Activated CD4-positive, alpha-beta memory T cell treated with anti-CD3 and anti-CD28 coated beads for 36 hours (primary cell): ENCODE measurements at regions of chr2 and their contacts with region 1.

Region 1: DNA sequence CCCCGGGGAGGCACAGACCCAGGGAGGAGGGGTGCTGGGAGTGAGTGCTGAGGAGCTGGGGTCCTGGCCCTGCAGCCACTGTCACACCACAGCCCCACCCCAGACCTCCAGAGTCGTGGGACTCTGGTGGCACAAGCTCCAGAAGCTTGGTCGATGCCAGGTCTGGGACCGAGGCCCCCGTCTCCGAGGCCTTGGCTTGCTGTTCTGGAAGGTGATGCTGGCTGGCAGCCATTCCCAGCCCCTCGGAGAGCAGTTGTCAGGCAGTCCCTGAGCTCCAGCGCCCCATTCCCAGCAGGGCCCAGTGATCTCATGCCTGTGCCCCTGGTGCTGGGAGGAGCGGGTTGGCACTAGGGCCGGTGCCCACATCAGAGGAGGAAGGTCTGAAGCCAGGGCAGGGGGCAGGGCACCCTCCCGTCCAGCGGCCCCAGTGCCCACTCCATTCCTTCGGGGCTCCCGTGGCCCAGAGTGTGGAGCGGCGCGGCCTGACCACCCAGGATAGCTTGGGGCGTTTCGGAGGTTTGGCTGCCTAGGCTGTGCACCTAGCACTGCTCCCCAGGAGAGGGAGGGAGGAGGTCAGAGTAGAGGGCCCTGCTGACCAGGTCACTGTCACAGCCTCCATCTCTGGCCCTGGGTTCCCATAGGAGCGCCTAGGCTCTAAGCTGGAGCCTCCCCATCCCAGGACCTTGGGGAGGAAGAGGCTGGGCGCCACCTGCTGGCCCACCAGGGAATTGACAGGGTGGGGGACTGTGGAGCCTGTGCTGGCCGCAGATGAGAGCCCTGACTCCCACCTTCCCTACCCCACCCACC is 16.8 kb upstream of the ALPI start:
- DNase-seq: peak; percentile 55
- H3K4me3 Mint-ChIP-seq: no peak overlapping the region
- H3K27ac Mint-ChIP-seq: no peak overlapping the region
- H3K4me1 Mint-ChIP-seq: no peaks in the 10 kb centered on the region
- H3K27me3 Mint-ChIP-seq: no peaks in the 10 kb centered on the region

Region 2: DNA sequence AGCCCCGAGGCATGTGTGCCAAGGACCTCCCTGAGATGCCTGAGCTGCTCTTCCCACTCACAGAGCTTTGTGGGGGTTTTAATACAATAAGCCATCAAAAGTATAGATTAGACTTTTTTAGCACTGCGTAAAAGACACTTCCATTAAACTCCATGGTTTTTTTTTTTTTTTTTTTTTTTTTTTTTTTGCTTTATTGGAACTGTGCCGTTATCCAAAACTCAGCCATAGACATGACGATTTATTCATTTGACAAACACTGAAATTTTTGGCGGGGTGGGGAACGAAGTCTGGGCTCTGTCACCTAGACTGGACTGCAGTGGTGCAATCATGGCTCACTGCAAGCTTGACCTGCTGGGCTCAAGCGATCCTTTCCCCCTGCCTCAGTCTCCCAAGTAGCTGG is 531.4 kb before region 1 on chr2:
- CTCF ChIA-PET with region 1: interaction called, 5 read pairs
- POLR2A ChIA-PET with region 1: no interaction called
- intact Hi-C with region 1: loop called (anchors 2 kb)
- DNase-seq: no peak
- H3K4me3 Mint-ChIP-seq: no peak overlapping the region
- H3K27ac Mint-ChIP-seq: no peak overlapping the region
- H3K4me1 Mint-ChIP-seq: peaks cover 7% of the 10 kb centered on the region
- H3K27me3 Mint-ChIP-seq: no peaks in the 10 kb centered on the region

Region 3: GRCh38 chr2:232333361-232334270 is 105.5 kb before region 1 on chr2:
- CTCF ChIA-PET with region 1: interaction called, 9 read pairs
- POLR2A ChIA-PET with region 1: no interaction called
- intact Hi-C with region 1: loop called (anchors 2 kb)
- DNase-seq: peak; percentile 9
- H3K4me3 Mint-ChIP-seq: no peak overlapping the region
- H3K27ac Mint-ChIP-seq: no peak overlapping the region
- H3K4me1 Mint-ChIP-seq: no peaks in the 10 kb centered on the region
- H3K27me3 Mint-ChIP-seq: no peaks in the 10 kb centered on the region

Region 4: DNA sequence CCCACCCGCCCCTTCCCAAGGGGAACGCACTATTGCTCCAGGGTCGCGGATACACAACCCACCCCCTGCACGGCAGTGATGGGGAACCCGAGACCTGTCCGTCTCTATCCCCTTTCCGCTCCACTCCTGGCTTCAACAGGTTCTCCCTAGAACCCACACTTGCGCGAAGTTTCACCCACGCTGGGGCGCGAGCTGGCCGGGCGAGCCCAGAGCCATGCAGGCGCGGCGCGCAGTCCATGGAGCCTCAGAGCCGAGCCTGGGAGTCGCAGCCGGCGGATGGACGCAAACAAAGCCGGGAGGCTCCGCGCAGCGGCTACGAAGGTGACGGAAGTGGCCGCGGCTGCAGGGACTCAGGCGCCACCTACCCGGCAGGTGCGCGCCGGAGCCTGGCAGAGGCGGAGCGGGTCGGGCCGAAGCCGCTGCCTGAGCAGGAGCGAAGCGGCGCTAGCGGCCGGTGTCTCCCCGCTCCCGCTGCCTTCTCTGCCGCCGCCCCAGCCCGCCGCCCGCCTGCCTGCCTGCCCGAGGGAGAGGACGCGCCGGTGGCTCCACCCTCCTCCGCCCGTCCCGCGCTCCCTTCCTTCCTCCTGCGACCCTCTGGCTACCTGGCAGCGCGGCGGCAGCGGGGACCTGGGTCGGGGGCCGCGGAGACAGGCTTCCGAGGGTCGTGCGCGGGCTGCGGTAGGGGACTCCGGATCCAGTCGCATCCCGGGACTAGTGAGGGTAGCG is 18.5 kb before region 1 on chr2:
- CTCF ChIA-PET with region 1: interaction called, 10 read pairs
- POLR2A ChIA-PET with region 1: no interaction called
- intact Hi-C with region 1: no loop called
- DNase-seq: peak; percentile 45
- H3K4me3 Mint-ChIP-seq: no peak overlapping the region
- H3K27ac Mint-ChIP-seq: no peak overlapping the region
- H3K4me1 Mint-ChIP-seq: peaks cover 11% of the 10 kb centered on the region
- H3K27me3 Mint-ChIP-seq: peaks cover 33% of the 10 kb centered on the region